MCF 10A (cell line): ENCODE measurements at regions of chr4 and their contacts with region 1.

Region 1: GRCh38 chr4:87555773-87556619 is 26.8 kb upstream of the SPARCL1 start:
- DNase-seq: peak; percentile 94
- H3K4me3 Mint-ChIP-seq: no peak overlapping the region
- H3K27ac Mint-ChIP-seq: peak overlapping the region; percentile 74
- H3K4me1 Mint-ChIP-seq: peaks cover 13% of the 10 kb centered on the region
- H3K27me3 Mint-ChIP-seq: no peaks in the 10 kb centered on the region
- CTCF ChIP-seq: no peak

Region 2: DNA sequence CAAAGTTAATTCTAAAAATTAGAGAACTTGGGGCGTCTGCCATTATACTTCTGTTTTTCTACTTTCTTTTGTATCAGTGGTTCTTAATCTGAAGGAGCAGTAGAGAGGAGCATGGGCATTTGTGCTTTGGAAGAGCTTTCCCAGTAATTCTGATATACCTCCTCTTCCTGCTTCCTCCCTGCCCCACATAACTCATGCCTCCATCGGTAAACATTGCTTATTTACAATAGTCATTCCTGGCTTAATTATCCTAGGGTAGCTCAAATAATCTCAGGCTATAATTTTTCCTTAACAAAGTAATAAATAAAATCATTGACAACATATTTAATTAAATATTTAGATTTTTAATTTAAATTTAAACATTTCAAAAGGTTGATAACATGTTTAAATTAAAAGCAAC is 10.3 kb after region 1 on chr4:
- CTCF ChIA-PET with region 1: interaction called, 3 read pairs
- POLR2A ChIA-PET with region 1: interaction called, 13 read pairs
- intact Hi-C with region 1: no loop called
- DNase-seq: no peak
- H3K4me3 Mint-ChIP-seq: no peak overlapping the region
- H3K27ac Mint-ChIP-seq: no peak overlapping the region
- H3K4me1 Mint-ChIP-seq: no peaks in the 10 kb centered on the region
- H3K27me3 Mint-ChIP-seq: no peaks in the 10 kb centered on the region
- CTCF ChIP-seq: no peak

Region 3: DNA sequence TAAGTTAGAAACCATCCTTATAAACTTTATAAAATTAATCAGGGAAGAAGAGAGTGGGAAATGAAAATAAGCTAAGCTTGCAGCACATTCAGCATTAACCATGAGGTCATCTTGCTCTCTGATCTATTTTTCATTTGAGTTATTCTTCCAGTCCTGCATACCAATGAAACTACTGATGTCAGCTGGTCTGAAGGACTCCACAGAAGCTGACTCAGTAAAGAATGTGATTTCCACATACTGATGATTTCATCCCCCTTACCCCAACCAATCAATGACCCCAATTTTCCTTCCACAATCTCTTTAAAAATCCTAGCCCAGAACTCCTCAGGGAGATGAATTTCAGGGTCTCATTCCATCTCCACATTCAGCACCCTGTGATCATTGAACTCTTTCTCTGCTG is 33.5 kb after region 1 on chr4:
- CTCF ChIA-PET with region 1: no interaction called
- POLR2A ChIA-PET with region 1: no interaction called
- intact Hi-C with region 1: loop called (anchors 1 kb)
- DNase-seq: peak; percentile 69
- H3K4me3 Mint-ChIP-seq: no peak overlapping the region
- H3K27ac Mint-ChIP-seq: no peak overlapping the region
- H3K4me1 Mint-ChIP-seq: peaks cover 8% of the 10 kb centered on the region
- H3K27me3 Mint-ChIP-seq: no peaks in the 10 kb centered on the region
- CTCF ChIP-seq: no peak

Region 4: GRCh38 chr4:87957061-87957460 is 401.1 kb after region 1 on chr4:
- CTCF ChIA-PET with region 1: no interaction called
- POLR2A ChIA-PET with region 1: no interaction called
- intact Hi-C with region 1: no loop called
- DNase-seq: no peak
- H3K4me3 Mint-ChIP-seq: no peak overlapping the region
- H3K27ac Mint-ChIP-seq: no peak overlapping the region
- H3K4me1 Mint-ChIP-seq: no peaks in the 10 kb centered on the region
- H3K27me3 Mint-ChIP-seq: no peaks in the 10 kb centered on the region
- CTCF ChIP-seq: no peak